Activated B cell treated with CpG ODN at 0.5 μM for 24 hours (primary cell): ENCODE measurements at regions of chr10 and their contacts with region 1.

Region 1: GRCh38 chr10:123008439-123009205 is at the starts of genes ACADSB and IKZF5:
- DNase-seq: peak; percentile 83
- ATAC-seq: peak; percentile 94
- H3K4me3 Mint-ChIP-seq: peak within 1 kb of the TSS; percentile 96
- H3K27ac Mint-ChIP-seq: peak within 1 kb of the TSS; percentile 96
- H3K4me1 Mint-ChIP-seq: peaks cover 50% of the 10 kb centered on the region
- H3K27me3 Mint-ChIP-seq: no peaks in the 10 kb centered on the region
- CTCF ChIP-seq: no peak
- total RNA-seq, gene ACADSB: 22.7 and 22.8 TPM in 2 replicates
- total RNA-seq, gene IKZF5: 14.2 and 17.0 TPM in 2 replicates

Region 2: GRCh38 chr10:121927841-121928527 is 1080.6 kb before region 1 on chr10 and contains the start of gene ATE1:
- CTCF ChIA-PET with region 1: no interaction called
- POLR2A ChIA-PET with region 1: interaction called, 3 read pairs
- intact Hi-C with region 1: loop called (anchors 2 kb)
- DNase-seq: peak; percentile 79
- ATAC-seq: peak; percentile 91
- H3K4me3 Mint-ChIP-seq: peak within 1 kb of the TSS; percentile 94
- H3K27ac Mint-ChIP-seq: peak within 1 kb of the TSS; percentile 91
- H3K4me1 Mint-ChIP-seq: peaks cover 19% of the 10 kb centered on the region
- H3K27me3 Mint-ChIP-seq: no peaks in the 10 kb centered on the region
- CTCF ChIP-seq: no peak
- total RNA-seq, gene ATE1: 26.0 and 31.0 TPM in 2 replicates

Region 3: GRCh38 chr10:122163174-122164022 is 845.2 kb before region 1 on chr10:
- CTCF ChIA-PET with region 1: no interaction called
- POLR2A ChIA-PET with region 1: no interaction called
- intact Hi-C with region 1: no loop called
- DNase-seq: no peak
- ATAC-seq: no peak
- H3K4me3 Mint-ChIP-seq: no peak overlapping the region
- H3K27ac Mint-ChIP-seq: no peak overlapping the region
- H3K4me1 Mint-ChIP-seq: peaks cover 8% of the 10 kb centered on the region
- H3K27me3 Mint-ChIP-seq: peaks cover 56% of the 10 kb centered on the region
- CTCF ChIP-seq: no peak

Region 4: GRCh38 chr10:122879339-122880273 is 129.0 kb before region 1 on chr10 and contains the start of gene FAM24B:
- CTCF ChIA-PET with region 1: no interaction called
- POLR2A ChIA-PET with region 1: no interaction called
- intact Hi-C with region 1: loop called (anchors 1 kb)
- DNase-seq: peak; percentile 83
- ATAC-seq: peak; percentile 85
- H3K4me3 Mint-ChIP-seq: peak within 1 kb of the TSS; percentile 85
- H3K27ac Mint-ChIP-seq: peak within 1 kb of the TSS; percentile 84
- H3K4me1 Mint-ChIP-seq: peaks cover 40% of the 10 kb centered on the region
- H3K27me3 Mint-ChIP-seq: no peaks in the 10 kb centered on the region
- CTCF ChIP-seq: no peak
- total RNA-seq, gene FAM24B: 7.3 and 10.0 TPM in 2 replicates

Region 5: GRCh38 chr10:122953827-122954730 is 54.5 kb before region 1 on chr10 and contains the start of gene C10orf88:
- CTCF ChIA-PET with region 1: no interaction called
- POLR2A ChIA-PET with region 1: interaction called, 12 read pairs
- intact Hi-C with region 1: loop called (anchors 1 kb)
- DNase-seq: peak; percentile 94
- ATAC-seq: peak; percentile 94
- H3K4me3 Mint-ChIP-seq: peak within 1 kb of the TSS; percentile 89
- H3K27ac Mint-ChIP-seq: peak within 1 kb of the TSS; percentile 84
- H3K4me1 Mint-ChIP-seq: peaks cover 28% of the 10 kb centered on the region
- H3K27me3 Mint-ChIP-seq: peaks cover 2% of the 10 kb centered on the region
- CTCF ChIP-seq: no peak
- total RNA-seq, gene C10orf88: 10.9 and 12.5 TPM in 2 replicates

Region 6: DNA sequence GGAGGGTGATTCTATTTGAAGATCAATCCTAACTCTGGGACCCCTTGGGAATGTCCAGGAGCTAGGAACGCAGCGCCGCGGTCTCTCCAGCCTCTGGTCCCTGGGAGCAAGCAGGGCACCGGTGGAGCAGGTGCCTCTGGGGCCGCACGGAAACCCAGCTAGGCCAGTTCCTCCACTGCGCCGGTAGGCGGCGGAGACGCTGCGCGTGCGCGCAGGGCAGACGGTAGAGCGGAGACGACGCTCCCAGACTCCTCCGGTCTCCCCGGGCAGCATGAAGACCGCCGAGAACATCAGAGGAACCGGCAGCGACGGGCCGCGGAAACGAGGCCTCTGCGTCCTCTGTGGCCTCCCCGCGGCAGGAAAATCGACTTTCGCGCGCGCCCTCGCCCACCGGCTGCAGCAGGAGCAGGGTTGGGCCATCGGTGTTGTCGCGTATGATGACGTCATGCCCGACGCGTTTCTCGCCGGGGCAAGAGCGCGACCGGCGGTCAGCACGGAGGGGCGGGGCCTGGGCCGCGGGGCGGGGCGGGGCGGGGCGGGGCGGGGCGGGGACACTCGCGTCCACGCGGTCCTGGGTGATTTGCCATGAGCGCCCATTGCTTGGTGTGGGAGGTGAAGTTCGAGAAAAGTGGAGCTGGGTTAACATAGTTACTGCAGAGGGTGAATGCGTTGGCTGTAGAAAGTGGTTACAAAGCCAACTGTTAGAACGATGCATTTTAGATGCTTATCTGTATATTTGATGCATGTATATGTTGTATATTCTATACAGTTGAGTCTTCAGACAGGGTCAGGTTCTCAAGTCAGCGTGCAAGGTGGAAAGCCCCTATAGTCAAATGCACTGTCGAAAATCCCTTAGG is 28.2 kb before region 1 on chr10 and contains the start of gene PSTK:
- CTCF ChIA-PET with region 1: no interaction called
- POLR2A ChIA-PET with region 1: interaction called, 43 read pairs
- intact Hi-C with region 1: loop called (anchors 1 kb)
- DNase-seq: peak; percentile 84
- ATAC-seq: peak; percentile 96
- H3K4me3 Mint-ChIP-seq: peak within 1 kb of the TSS; percentile 93
- H3K27ac Mint-ChIP-seq: peak within 1 kb of the TSS; percentile 96
- H3K4me1 Mint-ChIP-seq: peaks cover 18% of the 10 kb centered on the region
- H3K27me3 Mint-ChIP-seq: peaks cover 7% of the 10 kb centered on the region
- CTCF ChIP-seq: no peak
- total RNA-seq, gene PSTK: 3.9 and 5.3 TPM in 2 replicates

Region 7: DNA sequence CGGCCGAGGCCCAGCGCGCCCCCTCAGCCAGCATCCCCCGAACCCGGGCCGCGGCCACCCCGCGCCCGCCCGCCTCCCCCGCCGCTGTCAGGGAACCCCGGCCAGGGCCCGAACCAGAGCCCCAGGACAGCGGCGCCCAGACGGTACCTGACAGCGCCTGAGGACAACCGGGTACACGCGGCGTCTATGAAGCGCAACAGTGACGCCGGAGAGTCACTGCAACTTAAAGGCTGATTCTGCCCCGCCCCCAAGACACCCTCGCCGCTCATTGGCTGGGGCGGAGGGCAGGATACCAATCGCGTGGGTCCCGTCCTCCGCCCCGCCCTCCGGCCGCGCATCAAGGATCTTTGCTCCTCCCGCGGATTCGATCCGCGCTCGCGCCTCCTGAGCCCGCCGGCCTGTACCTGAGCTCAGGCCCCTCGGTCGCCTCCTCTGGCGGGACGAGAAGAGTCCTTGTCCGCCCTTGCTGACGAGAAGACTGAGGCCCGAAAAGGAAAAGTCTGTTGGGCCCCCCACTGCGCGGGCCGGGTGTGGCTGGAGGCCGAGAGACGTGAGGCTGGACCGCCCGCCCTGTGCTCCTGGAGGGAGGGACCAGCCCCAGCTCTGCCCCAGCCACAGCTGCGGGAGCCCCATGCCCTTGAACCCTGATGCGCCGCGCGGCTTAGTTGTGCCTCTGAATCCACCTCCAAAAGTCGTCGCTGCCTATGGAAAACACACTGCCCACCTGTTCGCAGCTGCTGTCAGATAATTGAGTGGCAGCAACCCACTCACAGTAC is 1410.3 kb after region 1 on chr10 and contains the start of gene OAT:
- CTCF ChIA-PET with region 1: no interaction called
- POLR2A ChIA-PET with region 1: no interaction called
- intact Hi-C with region 1: loop called (anchors 5 kb)
- DNase-seq: peak; percentile 92
- ATAC-seq: peak; percentile 97
- H3K4me3 Mint-ChIP-seq: peak within 1 kb of the TSS; percentile 82
- H3K27ac Mint-ChIP-seq: peak within 1 kb of the TSS; percentile 46
- H3K4me1 Mint-ChIP-seq: peaks cover 12% of the 10 kb centered on the region
- H3K27me3 Mint-ChIP-seq: peaks cover 19% of the 10 kb centered on the region
- CTCF ChIP-seq: no peak
- total RNA-seq, gene OAT: 19.6 and 20.1 TPM in 2 replicates

Region 8: GRCh38 chr10:124791378-124792348 is 1783.0 kb after region 1 on chr10 and contains the start of gene EEF1AKMT2:
- CTCF ChIA-PET with region 1: no interaction called
- POLR2A ChIA-PET with region 1: no interaction called
- intact Hi-C with region 1: loop called (anchors 10 kb)
- DNase-seq: peak; percentile 85
- ATAC-seq: peak; percentile 95
- H3K4me3 Mint-ChIP-seq: peak within 1 kb of the TSS; percentile 96
- H3K27ac Mint-ChIP-seq: peak within 1 kb of the TSS; percentile 91
- H3K4me1 Mint-ChIP-seq: peaks cover 25% of the 10 kb centered on the region
- H3K27me3 Mint-ChIP-seq: no peaks in the 10 kb centered on the region
- CTCF ChIP-seq: no peak
- total RNA-seq, gene EEF1AKMT2: 16.5 and 17.0 TPM in 2 replicates